ENCODE measurements at regions of chr3 and their contacts with region 1.

Region 1: DNA sequence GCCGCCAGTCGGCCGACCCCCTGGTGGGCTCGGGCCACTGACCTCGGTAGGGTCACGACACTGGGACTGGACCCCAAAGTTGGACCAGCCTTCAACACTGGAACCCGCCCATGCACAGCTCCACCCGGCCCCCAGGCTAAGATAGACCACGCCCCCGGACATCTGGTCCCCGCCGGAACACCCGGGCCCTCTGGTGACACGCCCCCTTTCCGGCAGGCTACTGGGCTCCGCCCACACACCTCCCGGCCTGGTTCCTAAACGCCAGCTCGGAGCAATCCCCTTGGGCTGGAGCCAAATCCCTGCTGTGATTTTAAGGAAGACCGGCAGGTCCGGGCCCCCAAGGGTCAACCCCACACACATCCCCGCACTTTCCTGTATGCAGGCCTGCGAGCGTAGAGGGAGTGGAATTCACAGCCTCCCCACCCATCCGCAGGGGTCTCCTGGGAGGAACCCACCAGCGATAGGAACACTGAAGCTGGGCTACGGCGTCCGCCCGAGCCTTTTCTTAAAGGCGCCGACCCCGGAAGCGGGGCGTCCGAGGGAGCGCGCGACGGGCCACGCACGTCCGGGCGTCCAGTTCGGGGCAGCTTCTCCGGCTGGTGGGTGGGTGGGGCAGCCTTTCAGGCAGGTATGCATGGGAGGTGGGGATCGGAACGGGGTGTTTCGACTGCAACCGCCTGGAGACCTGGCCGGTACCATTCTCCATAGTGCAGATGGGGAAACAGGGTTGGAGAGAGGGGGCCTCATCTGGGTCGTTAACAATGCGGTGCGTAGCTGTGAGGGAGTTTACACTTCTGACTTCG is at the start of gene HEMK1:
- DNase-seq: peak; percentile 97
- H3K4me3 Mint-ChIP-seq: peak within 1 kb of the TSS; percentile 98
- H3K27ac Mint-ChIP-seq: peak within 1 kb of the TSS; percentile 95
- H3K4me1 Mint-ChIP-seq: peaks cover 55% of the 10 kb centered on the region
- H3K27me3 Mint-ChIP-seq: no peaks in the 10 kb centered on the region
- total RNA-seq, gene HEMK1: 27.0 to 30.4 TPM

Region 2: GRCh38 chr3:50358911-50359759 is 210.0 kb before region 1 on chr3 and contains the start of gene TMEM115:
- CTCF ChIA-PET with region 1: no interaction called
- intact Hi-C with region 1: loop called (anchors 2 kb)
- DNase-seq: peak; percentile 98
- H3K4me3 Mint-ChIP-seq: peak within 1 kb of the TSS; percentile 97
- H3K27ac Mint-ChIP-seq: peak within 1 kb of the TSS; percentile 89
- H3K4me1 Mint-ChIP-seq: peaks cover 43% of the 10 kb centered on the region
- H3K27me3 Mint-ChIP-seq: no peaks in the 10 kb centered on the region
- total RNA-seq, gene TMEM115: 10.6 to 11.1 TPM

Region 3: DNA sequence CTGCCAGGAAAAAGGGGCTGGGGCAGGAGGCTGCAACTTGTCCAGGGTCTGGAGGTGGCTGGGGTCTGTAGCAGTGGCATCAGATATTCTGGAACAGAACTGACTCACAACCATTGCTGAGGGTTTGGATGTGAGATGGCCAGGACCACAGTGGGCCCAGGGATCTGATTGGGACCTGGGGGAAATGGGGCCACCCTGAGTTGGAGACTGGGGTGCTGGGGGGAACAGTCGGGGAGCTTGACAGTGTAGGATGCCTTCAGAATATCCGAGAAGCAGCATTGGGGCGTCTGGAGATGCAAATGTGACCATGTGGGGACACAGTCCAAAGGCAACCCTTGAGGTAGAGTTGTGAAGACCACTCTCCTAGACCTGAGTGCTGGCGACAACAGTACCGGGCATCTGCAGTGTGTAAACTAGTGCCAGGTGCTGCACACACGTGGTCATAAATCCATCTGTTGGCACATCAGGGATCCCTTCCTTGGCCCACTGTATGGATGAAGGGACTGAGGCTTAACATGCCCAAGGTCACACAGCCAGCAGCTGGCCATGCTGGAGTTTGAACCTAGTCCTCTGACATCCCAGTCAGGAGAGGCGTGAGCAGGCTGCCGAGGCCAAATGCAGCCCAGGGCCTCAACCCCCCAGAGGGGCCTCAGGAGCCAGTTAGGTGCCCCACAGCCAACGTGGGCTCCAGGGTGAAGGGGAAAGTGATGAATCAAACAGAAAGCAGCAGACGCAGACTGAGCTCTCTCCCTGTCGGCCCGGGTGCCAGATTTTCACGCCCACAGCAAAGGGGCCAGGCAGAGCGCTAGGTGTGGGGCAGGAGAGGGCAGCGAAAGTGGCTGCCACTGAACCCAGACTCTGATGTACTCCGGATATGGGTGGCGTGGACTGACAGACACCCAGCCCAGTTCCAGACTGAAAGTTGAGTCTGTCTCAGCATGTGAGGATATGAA is 18.9 kb after region 1 on chr3:
- CTCF ChIA-PET with region 1: interaction called, 274 read pairs
- intact Hi-C with region 1: loop called (anchors 1 kb)
- DNase-seq: peak; percentile 94
- H3K4me3 Mint-ChIP-seq: peak overlapping the region; percentile 42
- H3K27ac Mint-ChIP-seq: peak overlapping the region; percentile 99
- H3K4me1 Mint-ChIP-seq: peaks cover 91% of the 10 kb centered on the region
- H3K27me3 Mint-ChIP-seq: no peaks in the 10 kb centered on the region

Region 4: DNA sequence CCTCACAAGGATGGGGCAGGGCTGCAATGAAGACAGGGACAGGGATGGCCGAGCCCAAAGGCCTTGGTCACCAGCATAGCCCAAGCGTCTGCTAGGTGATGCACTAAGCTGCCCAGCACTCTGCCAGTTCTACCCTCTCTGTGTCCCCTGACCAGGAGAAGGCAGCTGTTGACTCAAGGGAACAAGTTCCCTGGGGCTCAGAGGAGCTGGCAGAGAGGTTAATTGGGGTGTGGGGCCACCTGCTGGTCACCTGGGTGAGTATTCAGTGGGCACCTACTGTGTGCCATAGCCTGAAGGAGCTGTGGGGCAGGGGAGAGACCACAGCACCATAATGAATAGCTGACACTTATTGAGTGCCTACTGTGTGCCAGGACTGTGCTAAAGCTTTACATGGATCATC is 83.6 kb after region 1 on chr3:
- CTCF ChIA-PET with region 1: interaction called, 31 read pairs
- intact Hi-C with region 1: loop called (anchors 1 kb)
- DNase-seq: peak; percentile 84
- H3K4me3 Mint-ChIP-seq: no peak overlapping the region
- H3K27ac Mint-ChIP-seq: no peak overlapping the region
- H3K4me1 Mint-ChIP-seq: peaks cover 22% of the 10 kb centered on the region
- H3K27me3 Mint-ChIP-seq: no peaks in the 10 kb centered on the region

Region 5: GRCh38 chr3:51024765-51025632 is 455.9 kb after region 1 on chr3:
- CTCF ChIA-PET with region 1: no interaction called
- intact Hi-C with region 1: loop called (anchors 2 kb)
- DNase-seq: peak; percentile 87
- H3K4me3 Mint-ChIP-seq: peak overlapping the region; percentile 8
- H3K27ac Mint-ChIP-seq: peak overlapping the region; percentile 83
- H3K4me1 Mint-ChIP-seq: peaks cover 39% of the 10 kb centered on the region
- H3K27me3 Mint-ChIP-seq: no peaks in the 10 kb centered on the region

Measured in activated naive CD4-positive, alpha-beta T cell treated with anti-CD3 and anti-CD28 coated beads for 36 hours (primary cell).